ENCODE measurements at regions of chr12 and their contacts with region 1.

Region 1: DNA sequence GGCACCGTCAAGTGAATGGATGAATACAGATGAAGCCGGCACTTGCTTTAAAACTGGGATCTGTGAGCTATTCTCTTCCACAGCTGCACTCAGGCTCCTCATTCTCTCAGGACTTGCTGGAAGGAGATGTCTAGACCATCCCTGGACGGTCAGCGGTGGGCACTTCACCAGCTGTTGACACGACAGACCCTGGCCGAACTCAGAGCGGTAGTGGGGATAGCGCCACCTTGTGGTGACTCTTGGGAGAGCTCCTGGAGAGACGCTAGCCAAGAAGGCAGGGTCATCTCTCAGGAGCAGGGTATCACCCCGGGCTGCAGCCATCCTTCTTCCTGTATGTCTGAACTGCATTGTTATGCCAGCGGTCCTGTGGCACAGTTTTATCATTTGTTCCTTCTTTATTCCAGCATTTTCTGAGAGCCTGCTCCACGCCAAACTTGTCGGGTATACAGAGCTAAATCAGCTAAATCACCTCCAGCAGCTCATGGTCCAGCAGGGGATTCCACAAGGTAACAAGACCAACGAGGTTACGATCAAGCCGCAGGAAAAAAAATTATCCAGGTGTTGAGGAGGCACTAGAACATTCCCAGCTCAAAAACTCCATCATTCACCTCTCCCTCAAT is 10.0 kb downstream of the WNT1 start:
- DNase-seq: peak; percentile 76
- ATAC-seq: peak; percentile 71
- H3K4me3 ChIP-seq: no peak overlapping the region
- H3K4me3 Mint-ChIP-seq: no peak overlapping the region
- H3K27ac ChIP-seq: no peak overlapping the region
- H3K27ac Mint-ChIP-seq: no peak overlapping the region
- H3K4me1 ChIP-seq: peaks cover 0 to 5% of the 10 kb centered on the region in 2 donors
- H3K4me1 Mint-ChIP-seq: peaks cover 6% of the 10 kb centered on the region
- H3K27me3 ChIP-seq: peaks cover 0 to 51% (median 22%) of the 10 kb centered on the region in 4 experiments
- H3K27me3 Mint-ChIP-seq: peaks cover 48% of the 10 kb centered on the region
- CTCF ChIP-seq: peak; percentile 84

Region 2: DNA sequence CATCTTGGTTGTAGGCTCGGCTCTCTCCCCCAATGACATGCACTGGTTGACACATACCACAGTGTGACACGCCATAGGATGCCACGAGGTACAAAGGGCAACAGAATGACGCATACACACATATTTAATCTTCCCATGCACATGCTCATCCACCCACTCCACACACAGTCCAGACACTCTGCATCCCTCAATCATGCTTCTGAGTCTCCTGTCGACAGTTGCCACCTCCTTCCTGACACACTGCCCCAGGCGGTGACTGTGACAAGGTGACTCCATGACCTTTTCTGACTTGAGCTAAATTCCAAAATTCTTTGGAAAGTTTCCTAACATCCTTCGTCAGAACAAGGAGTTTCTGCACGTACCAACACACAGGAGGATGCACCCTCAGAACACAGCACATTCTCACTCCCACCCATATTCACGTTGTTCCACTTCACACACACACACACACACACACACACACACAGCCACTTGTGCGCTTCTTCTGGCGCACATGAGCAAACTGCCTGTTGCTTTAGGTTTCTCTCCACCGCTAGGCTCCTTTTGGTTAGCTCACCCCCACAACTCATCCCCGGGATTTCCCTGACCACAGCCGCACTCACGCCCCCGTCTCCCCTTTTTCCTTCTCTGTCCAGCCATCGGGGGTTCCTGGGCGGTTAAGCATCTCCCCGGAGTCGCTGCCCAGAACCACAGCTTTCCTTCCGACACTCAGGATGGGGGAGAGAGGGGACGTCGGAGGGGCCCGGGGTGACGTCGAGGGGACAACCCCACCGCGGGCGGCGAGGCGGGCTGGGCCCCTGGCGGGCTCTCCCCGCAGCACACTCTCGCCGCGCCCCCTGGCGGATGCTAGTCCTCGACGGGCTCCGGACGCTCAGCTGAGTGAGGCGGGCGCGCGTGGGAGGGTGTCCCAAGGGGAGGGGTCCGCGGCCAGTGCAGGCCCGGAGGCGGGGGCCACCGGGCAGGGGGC is 10.5 kb before region 1 on chr12:
- CTCF ChIA-PET with region 1: interaction called, 45 read pairs
- POLR2A ChIA-PET with region 1: interaction called, 4 read pairs
- intact Hi-C with region 1: no loop called
- DNase-seq: peak; percentile 90
- ATAC-seq: peak; percentile 69
- H3K4me3 ChIP-seq: peak overlapping the region in 3 of 5 experiments; percentile 60 to 86 (median 65)
- H3K4me3 Mint-ChIP-seq: peak overlapping the region; percentile 72
- H3K27ac ChIP-seq: no peak overlapping the region
- H3K27ac Mint-ChIP-seq: peak overlapping the region; percentile 73
- H3K4me1 ChIP-seq: peaks cover 55 to 56% of the 10 kb centered on the region in 2 donors
- H3K4me1 Mint-ChIP-seq: peaks cover 57% of the 10 kb centered on the region
- H3K27me3 ChIP-seq: peaks cover 2 to 90% (median 54%) of the 10 kb centered on the region in 4 experiments
- H3K27me3 Mint-ChIP-seq: peaks cover 74% of the 10 kb centered on the region
- CTCF ChIP-seq: peak; percentile 92

Region 3: GRCh38 chr12:49000346-49000745 is 12.2 kb after region 1 on chr12:
- CTCF ChIA-PET with region 1: interaction called, 23 read pairs
- POLR2A ChIA-PET with region 1: no interaction called
- intact Hi-C with region 1: no loop called
- DNase-seq: no peak
- ATAC-seq: no peak
- H3K4me3 ChIP-seq: no peak overlapping the region
- H3K4me3 Mint-ChIP-seq: peak overlapping the region; percentile 89
- H3K27ac ChIP-seq: no peak overlapping the region
- H3K27ac Mint-ChIP-seq: no peak overlapping the region
- H3K4me1 ChIP-seq: peaks cover 33 to 40% of the 10 kb centered on the region in 2 donors
- H3K4me1 Mint-ChIP-seq: peaks cover 39% of the 10 kb centered on the region
- H3K27me3 ChIP-seq: peaks cover 0 to 52% (median 14%) of the 10 kb centered on the region in 4 experiments
- H3K27me3 Mint-ChIP-seq: peaks cover 21% of the 10 kb centered on the region
- CTCF ChIP-seq: no peak

Measured in B cell (primary cell).